Activated CD4-positive, alpha-beta T cell treated with anti-CD3 and anti-CD28 coated beads for 36 hours (primary cell): ENCODE measurements at regions of chr3 and their contacts with region 1.

Region 1: DNA sequence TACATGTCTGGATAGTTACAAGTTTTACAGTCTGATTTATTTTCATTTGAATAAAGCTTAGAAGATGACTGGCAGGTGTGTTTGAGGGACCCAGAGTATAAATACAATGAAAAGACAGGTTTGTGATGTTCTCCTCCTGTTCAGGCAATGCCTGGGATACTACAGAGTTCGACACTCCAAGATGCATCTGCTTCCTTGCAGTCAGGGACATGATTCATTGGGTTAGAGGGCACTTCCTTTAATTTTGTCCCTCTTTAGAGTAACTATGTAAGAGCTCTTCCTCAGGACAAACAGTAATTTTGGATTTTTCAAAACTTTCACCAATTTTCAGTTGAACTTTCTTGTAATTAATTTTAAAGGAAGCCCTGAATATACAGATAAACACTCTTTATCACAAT is 102.0 kb downstream of the LMLN start:
- DNase-seq: no peak
- ATAC-seq: no peak
- H3K4me3 Mint-ChIP-seq: no peak overlapping the region
- H3K27ac Mint-ChIP-seq: no peak overlapping the region
- H3K4me1 Mint-ChIP-seq: peaks cover 22% of the 10 kb centered on the region
- H3K27me3 Mint-ChIP-seq: peaks cover 16% of the 10 kb centered on the region

Region 2: GRCh38 chr3:198051836-198052235 is 10.2 kb before region 1 on chr3:
- CTCF ChIA-PET with region 1: interaction called, 25 read pairs
- POLR2A ChIA-PET with region 1: no interaction called
- intact Hi-C with region 1: no loop called
- DNase-seq: no peak
- ATAC-seq: no peak
- H3K4me3 Mint-ChIP-seq: no peak overlapping the region
- H3K27ac Mint-ChIP-seq: no peak overlapping the region
- H3K4me1 Mint-ChIP-seq: no peaks in the 10 kb centered on the region
- H3K27me3 Mint-ChIP-seq: peaks cover 8% of the 10 kb centered on the region

Region 3: DNA sequence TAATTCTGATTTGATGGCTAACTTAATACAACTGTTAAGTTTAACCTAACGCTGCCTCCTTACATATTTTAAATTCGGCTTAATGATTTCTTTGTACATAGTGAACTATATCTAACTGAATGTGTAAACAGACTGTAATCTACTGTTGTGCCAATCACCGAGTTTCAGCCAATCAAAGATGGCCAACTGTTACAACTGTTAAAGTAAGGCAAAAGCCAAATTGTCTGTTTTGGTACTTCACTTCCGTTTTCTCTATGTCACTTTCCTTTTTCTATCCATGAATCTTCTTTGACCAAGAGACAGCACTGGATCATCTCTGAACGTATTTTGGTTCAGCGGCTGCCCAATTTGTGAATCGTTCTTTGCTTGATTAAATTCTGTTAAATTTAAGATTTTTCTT is 35.0 kb after region 1 on chr3:
- CTCF ChIA-PET with region 1: no interaction called
- POLR2A ChIA-PET with region 1: no interaction called
- intact Hi-C with region 1: no loop called
- DNase-seq: no peak
- ATAC-seq: no peak
- H3K4me3 Mint-ChIP-seq: no peak overlapping the region
- H3K27ac Mint-ChIP-seq: no peak overlapping the region
- H3K4me1 Mint-ChIP-seq: peaks cover 5% of the 10 kb centered on the region
- H3K27me3 Mint-ChIP-seq: peaks cover 18% of the 10 kb centered on the region